ENCODE measurements at regions of chr6 and their contacts with region 1.

Region 1: DNA sequence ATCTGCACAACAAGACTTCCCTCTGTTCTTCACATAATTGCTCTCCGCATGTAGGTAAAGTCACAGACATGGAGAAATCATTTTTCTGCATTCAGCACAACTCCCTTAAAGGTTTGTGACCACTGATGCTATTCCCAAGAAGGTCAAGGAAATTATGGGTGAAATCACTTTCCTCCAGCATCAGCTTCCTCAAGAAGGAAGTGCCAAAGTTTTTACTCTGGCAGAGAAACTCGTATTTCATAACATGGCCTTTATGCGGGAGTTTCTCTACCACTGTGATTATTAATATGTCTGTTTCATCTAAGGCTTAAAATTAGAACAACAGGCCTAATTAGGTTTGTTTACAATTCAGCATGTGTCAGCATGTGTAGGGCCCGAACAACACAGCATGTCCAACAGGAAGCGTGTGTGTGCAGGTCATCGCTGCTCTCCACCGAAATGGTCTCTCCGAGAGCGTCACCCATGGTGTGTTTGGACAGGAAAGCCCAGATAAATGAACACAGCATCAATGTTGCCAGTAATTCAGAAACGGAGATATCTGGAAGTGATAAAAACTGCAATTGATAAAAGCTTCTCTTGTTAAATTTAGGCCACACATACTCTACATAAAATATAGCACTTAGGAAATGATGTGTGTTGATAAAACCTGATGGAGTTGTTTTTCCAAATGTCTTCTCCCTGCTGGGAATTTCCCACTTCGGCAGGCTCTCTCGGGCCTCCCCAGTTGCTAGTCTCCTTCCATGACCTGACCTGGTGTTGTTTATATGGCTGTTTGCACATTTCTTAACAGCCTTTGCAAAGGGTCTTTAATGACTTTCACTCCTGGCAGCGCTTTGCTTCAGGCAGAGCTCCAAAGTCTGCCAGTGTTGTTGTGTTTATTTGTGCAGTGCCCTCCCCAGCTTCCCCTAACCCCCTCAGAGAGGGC is 265.1 kb upstream of the CEP162 start:
- DNase-seq: no peak
- H3K4me3 ChIP-seq: no peak overlapping the region
- H3K27ac ChIP-seq: peak overlapping the region; percentile 52 to 56
- H3K4me1 ChIP-seq: peaks cover 0 to 8% of the 10 kb centered on the region in 2 donors
- H3K27me3 ChIP-seq: no peaks in the 10 kb centered on the region
- CTCF ChIP-seq: no peak

Region 2: GRCh38 chr6:84449220-84449619 is 43.3 kb before region 1 on chr6:
- intact Hi-C with region 1: loop called (anchors 5 kb)
- DNase-seq: no peak
- H3K4me3 ChIP-seq: no peak overlapping the region
- H3K27ac ChIP-seq: no peak overlapping the region
- H3K4me1 ChIP-seq: no peaks in the 10 kb centered on the region
- H3K27me3 ChIP-seq: no peaks in the 10 kb centered on the region
- CTCF ChIP-seq: no peak

Measured in ascending aorta (tissue), 2 donors.